ENCODE measurements at regions of chr10 and their contacts with region 1.

Region 1: GRCh38 chr10:45464958-45465567 is 91.0 kb downstream of the ALOX5 start:
- DNase-seq: peak; percentile 82
- H3K4me3 Mint-ChIP-seq: no peak overlapping the region
- H3K27ac Mint-ChIP-seq: no peak overlapping the region
- H3K4me1 Mint-ChIP-seq: peaks cover 54% of the 10 kb centered on the region
- H3K27me3 Mint-ChIP-seq: no peaks in the 10 kb centered on the region

Region 2: DNA sequence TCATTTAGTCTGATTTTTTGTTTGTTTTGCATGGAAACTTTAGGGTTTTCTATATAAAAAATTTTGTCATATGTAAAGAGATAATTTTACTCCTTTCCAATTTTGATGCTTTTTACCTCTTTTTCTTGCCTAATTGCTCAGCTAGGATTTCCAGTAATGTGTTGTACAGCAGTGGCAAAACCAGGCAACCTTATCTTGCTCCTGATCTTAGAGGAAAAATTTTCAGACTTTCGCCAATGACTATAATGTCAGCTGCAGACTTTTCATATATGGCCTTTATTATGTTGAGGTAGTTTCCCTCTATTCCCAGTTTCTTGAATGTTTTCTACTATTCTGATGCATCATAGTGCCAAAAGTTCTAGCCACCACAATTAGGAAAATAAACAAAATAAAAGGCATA is 35.2 kb after region 1 on chr10:
- CTCF ChIA-PET with region 1: no interaction called
- POLR2A ChIA-PET with region 1: no interaction called
- DNase-seq: no peak
- H3K4me3 Mint-ChIP-seq: no peak overlapping the region
- H3K27ac Mint-ChIP-seq: no peak overlapping the region
- H3K4me1 Mint-ChIP-seq: peaks cover 11% of the 10 kb centered on the region
- H3K27me3 Mint-ChIP-seq: no peaks in the 10 kb centered on the region

Region 3: DNA sequence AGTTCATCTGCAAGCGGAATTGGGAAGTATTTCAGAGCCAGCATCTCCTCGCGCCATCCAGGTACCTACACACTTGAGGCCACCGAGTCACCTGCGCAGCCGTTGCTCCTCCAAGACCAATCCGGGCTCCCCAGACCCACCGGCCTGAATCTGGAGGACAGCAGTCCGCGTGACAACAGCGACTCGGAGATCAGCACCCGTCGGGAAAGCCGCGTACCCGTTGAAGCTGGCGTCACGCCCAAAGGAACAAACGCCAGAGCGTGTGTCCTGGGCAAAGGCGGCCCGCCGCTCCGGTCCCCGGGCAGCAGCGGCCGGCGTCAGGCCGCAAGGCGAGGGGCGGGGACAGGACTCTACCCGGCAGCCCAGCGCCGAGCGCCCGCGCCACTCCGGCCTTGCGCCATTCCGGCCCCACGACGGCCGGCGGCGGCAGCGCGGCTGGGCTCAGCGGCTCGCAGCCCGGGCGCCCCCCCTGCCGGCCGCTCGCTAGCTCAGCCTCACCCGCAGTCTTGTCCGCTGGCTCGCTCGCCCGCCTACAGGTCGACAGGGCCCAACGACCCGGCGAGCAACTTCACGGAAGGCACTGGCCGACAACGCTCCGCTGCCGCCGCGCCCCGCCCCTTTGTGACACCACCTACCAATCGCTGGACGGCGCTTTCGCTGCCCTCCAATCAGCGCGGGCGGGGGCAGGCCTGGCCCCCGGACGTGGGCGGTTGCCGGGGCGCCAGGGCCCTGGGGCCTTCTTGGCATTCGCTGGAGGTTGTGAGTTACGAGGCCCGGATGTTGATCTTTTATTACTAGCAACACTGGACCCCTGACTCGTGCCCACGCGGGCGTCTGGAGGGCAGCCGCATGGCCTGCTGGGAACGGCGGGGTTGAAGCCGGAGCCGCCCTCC is 207.4 kb after region 1 on chr10 and contains the start of gene ZFAND4:
- CTCF ChIA-PET with region 1: interaction called, 22 read pairs
- POLR2A ChIA-PET with region 1: interaction called, 5 read pairs
- DNase-seq: peak; percentile 96
- H3K4me3 Mint-ChIP-seq: peak within 1 kb of the TSS; percentile 92
- H3K27ac Mint-ChIP-seq: peak within 1 kb of the TSS; percentile 80
- H3K4me1 Mint-ChIP-seq: peaks cover 33% of the 10 kb centered on the region
- H3K27me3 Mint-ChIP-seq: no peaks in the 10 kb centered on the region
- total RNA-seq, gene ZFAND4: 19.6 to 19.7 TPM

Measured in activated CD4-positive, alpha-beta memory T cell treated with anti-CD3 and anti-CD28 coated beads, Interleukin-2, amount 10 ng/mL, durations not matched to agents 7 days and 5 days (primary cell).